Activated CD4-positive, alpha-beta T cell treated with anti-CD3 and anti-CD28 coated beads, Interleukin-2, amount 10 ng/mL, durations not matched to agents 24 days and 14 days (primary cell): ENCODE measurements at regions of chr5 and their contacts with region 1.

Region 1: GRCh38 chr5:35902046-35902676 is 36.3 kb downstream of the CAPSL start:
- DNase-seq: peak; percentile 87
- H3K4me3 Mint-ChIP-seq: peak overlapping the region; percentile 36
- H3K27ac Mint-ChIP-seq: peak overlapping the region; percentile 79
- H3K4me1 Mint-ChIP-seq: peaks cover 76% of the 10 kb centered on the region
- H3K27me3 Mint-ChIP-seq: no peaks in the 10 kb centered on the region

Region 2: GRCh38 chr5:34929150-34929719 is 972.9 kb before region 1 on chr5 and contains the start of gene DNAJC21:
- intact Hi-C with region 1: loop called (anchors 10 kb)
- DNase-seq: peak; percentile 100
- H3K4me3 Mint-ChIP-seq: peak within 1 kb of the TSS; percentile 99
- H3K27ac Mint-ChIP-seq: peak within 1 kb of the TSS; percentile 97
- H3K4me1 Mint-ChIP-seq: peaks cover 35% of the 10 kb centered on the region
- H3K27me3 Mint-ChIP-seq: no peaks in the 10 kb centered on the region
- total RNA-seq, gene DNAJC21: 69.0 and 69.6 TPM in 2 replicates

Region 3: GRCh38 chr5:35736280-35736679 is 165.9 kb before region 1 on chr5:
- intact Hi-C with region 1: loop called (anchors 1 kb)
- DNase-seq: peak; percentile 54
- H3K4me3 Mint-ChIP-seq: no peak overlapping the region
- H3K27ac Mint-ChIP-seq: peak overlapping the region; percentile 41
- H3K4me1 Mint-ChIP-seq: peaks cover 20% of the 10 kb centered on the region
- H3K27me3 Mint-ChIP-seq: no peaks in the 10 kb centered on the region

Region 4: DNA sequence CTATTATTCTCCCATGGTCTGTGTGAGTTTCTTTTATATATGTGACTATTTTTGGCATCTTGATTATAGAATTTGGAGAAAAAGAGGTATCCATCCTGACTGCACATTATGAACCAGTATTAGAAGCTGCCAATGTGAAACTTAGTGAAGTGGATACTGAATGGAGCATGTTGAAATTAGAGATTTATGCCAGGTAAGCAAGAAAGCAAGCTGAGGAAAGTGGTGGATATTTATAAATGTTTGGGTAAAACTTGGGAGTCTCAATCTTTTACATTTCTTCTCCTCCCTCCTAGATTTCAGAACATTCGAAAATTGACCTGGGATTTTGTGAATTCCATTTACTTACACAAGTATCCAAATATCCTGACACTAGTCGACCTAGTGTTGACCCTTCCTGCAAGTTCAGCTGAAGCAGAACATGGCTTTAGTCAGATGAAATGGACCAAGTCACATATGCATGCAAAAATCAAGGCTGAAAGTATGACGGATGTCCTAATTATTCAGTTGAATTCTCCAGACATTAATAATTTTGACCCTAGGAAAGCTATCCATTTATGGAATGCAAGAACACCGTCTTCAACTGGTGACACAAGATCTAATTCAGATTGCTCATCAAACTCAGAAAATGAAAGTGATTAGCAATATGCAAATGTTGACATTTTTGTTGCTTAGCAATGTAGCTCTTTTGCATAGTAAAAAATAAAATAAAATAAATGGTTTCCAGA is 112.3 kb before region 1 on chr5:
- intact Hi-C with region 1: no loop called
- DNase-seq: peak; percentile 56
- H3K4me3 Mint-ChIP-seq: peak overlapping the region; percentile 39
- H3K27ac Mint-ChIP-seq: peak overlapping the region; percentile 74
- H3K4me1 Mint-ChIP-seq: peaks cover 77% of the 10 kb centered on the region
- H3K27me3 Mint-ChIP-seq: no peaks in the 10 kb centered on the region

Region 5: GRCh38 chr5:35815089-35815936 is 86.8 kb before region 1 on chr5:
- intact Hi-C with region 1: loop called (anchors 1 kb)
- DNase-seq: peak; percentile 83
- H3K4me3 Mint-ChIP-seq: no peak overlapping the region
- H3K27ac Mint-ChIP-seq: no peak overlapping the region
- H3K4me1 Mint-ChIP-seq: peaks cover 34% of the 10 kb centered on the region
- H3K27me3 Mint-ChIP-seq: no peaks in the 10 kb centered on the region

Region 6: GRCh38 chr5:35838370-35839042 is 63.7 kb before region 1 on chr5:
- intact Hi-C with region 1: loop called (anchors 1 kb)
- DNase-seq: peak; percentile 58
- H3K4me3 Mint-ChIP-seq: peak overlapping the region; percentile 39
- H3K27ac Mint-ChIP-seq: peak overlapping the region; percentile 88
- H3K4me1 Mint-ChIP-seq: peaks cover 53% of the 10 kb centered on the region
- H3K27me3 Mint-ChIP-seq: no peaks in the 10 kb centered on the region

Region 7: GRCh38 chr5:35938568-35939227 is 36.5 kb after region 1 on chr5 and contains the start of gene CAPSL:
- intact Hi-C with region 1: no loop called
- DNase-seq: peak; percentile 53
- H3K4me3 Mint-ChIP-seq: no peak within 1 kb of the TSS
- H3K27ac Mint-ChIP-seq: no peak within 1 kb of the TSS
- H3K4me1 Mint-ChIP-seq: no peaks in the 10 kb centered on the region
- H3K27me3 Mint-ChIP-seq: peaks cover 17% of the 10 kb centered on the region
- total RNA-seq, gene CAPSL: not detected in 2 replicates

Region 8: GRCh38 chr5:36222620-36223019 is 320.5 kb after region 1 on chr5:
- intact Hi-C with region 1: no loop called
- DNase-seq: no peak
- H3K4me3 Mint-ChIP-seq: no peak overlapping the region
- H3K27ac Mint-ChIP-seq: no peak overlapping the region
- H3K4me1 Mint-ChIP-seq: no peaks in the 10 kb centered on the region
- H3K27me3 Mint-ChIP-seq: no peaks in the 10 kb centered on the region

Region 9: DNA sequence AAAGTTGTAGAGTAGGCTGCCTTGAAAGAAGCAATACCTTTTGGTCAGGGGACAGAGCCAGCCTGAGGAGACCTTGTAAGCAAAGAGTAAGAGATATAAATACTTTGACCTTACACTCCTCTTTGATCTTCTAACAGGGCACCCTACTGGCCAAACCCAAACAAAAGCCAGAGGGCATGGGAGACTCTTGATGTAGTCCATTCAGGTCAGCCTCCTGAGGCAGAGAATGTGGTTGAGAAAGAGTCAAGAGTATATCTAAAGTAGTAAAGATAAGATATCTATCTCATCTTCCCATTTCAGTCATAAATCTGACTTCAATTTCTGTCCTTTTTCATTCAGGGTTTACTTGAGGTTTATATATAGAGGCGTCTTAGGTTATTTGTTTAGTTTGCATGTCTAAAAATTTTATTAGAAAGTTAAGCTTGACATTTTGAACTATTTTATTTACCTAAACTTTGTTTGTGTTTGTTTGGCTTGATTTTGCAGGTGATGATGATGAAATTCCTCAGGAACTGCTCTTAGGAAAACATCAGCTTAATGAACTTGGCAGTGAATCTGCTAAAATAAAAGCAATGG is 1100.1 kb after region 1 on chr5:
- intact Hi-C with region 1: no loop called
- DNase-seq: no peak
- H3K4me3 Mint-ChIP-seq: no peak overlapping the region
- H3K27ac Mint-ChIP-seq: no peak overlapping the region
- H3K4me1 Mint-ChIP-seq: peaks cover 4% of the 10 kb centered on the region
- H3K27me3 Mint-ChIP-seq: no peaks in the 10 kb centered on the region